Activated CD4-positive, alpha-beta T cell treated with anti-CD3 and anti-CD28 coated beads for 36 hours (primary cell): ENCODE measurements at regions of chr5 and their contacts with region 1.

Region 1: DNA sequence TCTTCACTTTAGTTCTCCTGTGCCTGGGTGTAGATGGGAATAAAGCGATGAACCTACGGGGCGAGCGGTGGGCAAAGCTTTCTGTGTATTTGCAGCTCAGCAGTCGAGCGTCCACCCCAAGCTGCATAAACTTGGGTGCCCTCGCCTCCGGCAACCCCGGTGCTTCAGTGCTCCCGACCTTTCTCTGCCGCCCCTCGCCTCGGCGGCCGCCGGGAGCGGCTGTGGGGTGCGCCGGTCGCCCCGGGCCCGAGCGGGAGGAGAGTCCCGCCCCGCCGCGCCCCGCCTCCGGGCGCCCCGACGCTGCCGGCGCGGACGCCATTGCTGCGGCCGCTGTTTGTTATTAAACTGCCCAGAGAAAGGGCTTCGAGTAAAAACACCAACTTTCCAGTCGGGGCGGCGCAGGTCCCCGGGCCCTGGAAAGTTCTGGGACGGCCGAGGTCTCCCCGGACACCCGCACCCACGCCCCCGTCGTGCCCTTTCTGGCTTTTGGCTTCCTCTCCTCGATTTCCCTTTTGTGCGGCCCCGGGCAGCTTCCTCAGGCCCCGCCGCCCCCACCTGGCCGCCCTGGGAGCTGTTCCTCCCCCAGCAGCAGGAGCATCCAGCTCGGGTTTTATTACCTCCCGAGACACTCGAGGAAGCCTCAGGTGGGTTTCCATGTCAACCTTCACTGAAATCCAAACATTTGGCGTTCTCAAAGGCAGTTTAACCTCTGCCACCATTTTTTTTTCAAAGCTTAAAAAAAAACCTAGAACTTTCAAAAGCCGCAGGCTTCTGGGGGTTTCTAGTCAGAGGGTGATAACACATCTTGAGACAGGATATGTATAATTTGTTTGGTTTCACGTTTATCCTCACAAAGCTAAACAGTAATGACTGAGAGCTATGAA is 334.3 kb downstream of the CWC27 start:
- DNase-seq: peak; percentile 52
- ATAC-seq: peak; percentile 84
- H3K4me3 Mint-ChIP-seq: peak overlapping the region; percentile 66
- H3K27ac Mint-ChIP-seq: peak overlapping the region; percentile 72
- H3K4me1 Mint-ChIP-seq: peaks cover 30% of the 10 kb centered on the region
- H3K27me3 Mint-ChIP-seq: peaks cover 9% of the 10 kb centered on the region

Region 2: GRCh38 chr5:65172486-65173129 is 69.5 kb after region 1 on chr5:
- CTCF ChIA-PET with region 1: no interaction called
- POLR2A ChIA-PET with region 1: no interaction called
- intact Hi-C with region 1: loop called in 1 of 2 experiments (anchors 5 kb)
- DNase-seq: peak; percentile 85
- ATAC-seq: peak; percentile 100
- H3K4me3 Mint-ChIP-seq: no peak overlapping the region
- H3K27ac Mint-ChIP-seq: no peak overlapping the region
- H3K4me1 Mint-ChIP-seq: peaks cover 10% of the 10 kb centered on the region
- H3K27me3 Mint-ChIP-seq: peaks cover 21% of the 10 kb centered on the region